ENCODE measurements at regions of chr6 and their contacts with region 1.

Region 1: GRCh38 chr6:159761873-159762680 is at the start of gene ACAT2:
- H3K4me3 ChIP-seq: peak within 1 kb of the TSS; percentile 64
- H3K27ac ChIP-seq: peak within 1 kb of the TSS; percentile 95
- H3K4me1 ChIP-seq: no peaks in the 10 kb centered on the region
- CTCF ChIP-seq: peak; percentile 46; the same call in 1 of the 2 replicates

Region 2: GRCh38 chr6:159726918-159727716 is 35.0 kb before region 1 on chr6 and contains the start of gene WTAP:
- CTCF ChIA-PET with region 1: no interaction called
- POLR2A ChIA-PET with region 1: interaction called, 68 read pairs
- H3K4me3 ChIP-seq: peak within 1 kb of the TSS; percentile 91
- H3K27ac ChIP-seq: peak within 1 kb of the TSS; percentile 99
- H3K4me1 ChIP-seq: peaks cover 7% of the 10 kb centered on the region; the same call in 1 of the 2 replicates
- CTCF ChIP-seq: peak; percentile 59; the same call in 1 of the 2 replicates